ENCODE measurements at regions of chr2 and their contacts with region 1.

Region 1: DNA sequence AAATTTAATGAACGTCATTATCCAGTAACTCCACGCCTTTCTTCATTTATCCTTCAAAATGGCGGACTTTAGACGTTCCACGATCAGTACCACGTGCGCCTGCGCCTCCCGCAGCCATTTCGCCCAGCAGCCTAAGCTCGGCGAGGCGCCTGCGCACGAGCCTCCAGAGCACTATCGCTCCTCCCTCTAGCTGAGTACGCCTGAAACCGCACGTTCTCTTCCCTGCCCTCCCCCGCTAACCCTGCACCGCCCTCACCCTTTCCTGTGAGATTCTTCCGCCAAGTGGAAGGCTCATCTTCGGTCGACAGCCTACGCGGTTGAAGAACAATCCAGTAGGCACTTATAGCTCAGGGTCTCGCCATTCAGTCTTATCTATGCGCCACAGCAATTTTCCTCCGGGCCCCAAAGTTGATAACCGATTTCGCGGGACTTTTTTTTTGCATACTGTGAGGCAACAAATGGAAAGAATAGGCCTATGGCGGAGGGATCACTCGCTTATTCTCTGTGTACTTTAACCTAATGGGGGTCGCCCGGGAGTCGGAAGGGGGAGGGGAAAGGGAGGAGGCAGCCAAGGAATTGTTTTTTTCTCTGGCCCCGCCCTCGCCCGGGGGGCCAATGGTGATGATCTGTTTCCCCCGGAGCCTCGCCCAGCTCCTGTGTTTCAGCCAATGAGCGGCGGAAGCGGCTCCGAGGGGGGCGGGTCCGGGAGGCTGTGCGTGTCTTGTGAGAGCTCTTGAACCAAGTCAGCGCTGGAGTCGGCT is at the start of gene KDM3A:
- DNase-seq: peak; percentile 95 to 100 (median 99)
- ATAC-seq: peak; percentile 87
- H3K4me3 ChIP-seq: peak within 1 kb of the TSS; percentile 88
- H3K4me3 Mint-ChIP-seq: peak within 1 kb of the TSS; percentile 92 to 99 (median 97)
- H3K27ac ChIP-seq: peak within 1 kb of the TSS; percentile 78
- H3K27ac Mint-ChIP-seq: peak within 1 kb of the TSS; percentile 97 to 99 (median 99)
- H3K4me1 ChIP-seq: peaks cover 31 to 34% of the 10 kb centered on the region in 2 donors
- H3K4me1 Mint-ChIP-seq: peaks cover 34 to 51% (median 44%) of the 10 kb centered on the region in 7 donors
- H3K27me3 ChIP-seq: no peaks in the 10 kb centered on the region
- H3K27me3 Mint-ChIP-seq: peaks cover 0 to 10% (median 0%) of the 10 kb centered on the region in 5 donors
- total RNA-seq, gene KDM3A: 132 to 191 (median 169) TPM

Region 2: DNA sequence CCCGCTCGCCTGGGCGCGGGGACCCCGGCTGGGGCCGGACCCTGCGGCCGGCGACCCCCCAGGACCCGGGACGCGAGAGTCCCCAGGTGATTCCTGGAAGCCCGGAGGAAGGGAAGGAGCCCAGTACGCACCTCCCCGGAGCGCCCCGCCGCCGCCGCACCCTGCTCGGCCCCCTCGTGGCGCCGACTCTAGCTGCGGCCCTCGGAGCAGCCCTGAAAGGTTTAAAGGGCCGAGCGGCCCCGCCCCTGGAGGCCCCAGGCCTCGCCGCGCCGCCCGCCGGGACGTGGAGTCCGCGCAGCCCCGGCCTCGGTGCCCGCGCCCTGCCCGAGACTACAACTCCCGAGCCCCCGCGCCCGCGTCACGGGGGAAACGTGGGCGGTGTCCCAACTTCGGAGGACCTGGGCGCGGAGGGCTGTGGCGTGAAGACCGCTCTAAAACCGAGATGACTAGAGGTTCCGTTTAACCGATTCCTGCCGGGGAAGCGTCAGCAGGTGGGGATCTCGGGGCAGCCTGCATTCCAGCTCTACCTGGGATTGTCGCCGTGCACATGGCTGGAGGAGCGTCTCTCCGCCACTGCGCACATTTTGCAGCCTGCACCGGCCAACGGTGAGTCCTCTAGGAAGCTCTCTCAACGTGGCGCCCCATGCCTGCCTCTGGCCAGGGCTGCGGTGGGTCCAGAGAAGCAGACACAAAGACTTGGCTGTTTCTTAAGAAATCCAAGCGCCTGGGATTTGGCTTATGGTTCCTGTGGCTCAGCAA is 838.2 kb before region 1 on chr2 and contains the start of gene TMEM150A:
- CTCF ChIA-PET with region 1: no interaction called
- POLR2A ChIA-PET with region 1: no interaction called
- intact Hi-C with region 1: loop called in 1 of 2 experiments (anchors 5 kb)
- DNase-seq: peak; percentile 68 to 91 (median 78)
- ATAC-seq: peak; percentile 97
- H3K4me3 ChIP-seq: peak within 1 kb of the TSS; percentile 99
- H3K4me3 Mint-ChIP-seq: peak within 1 kb of the TSS; percentile 89 to 98 (median 91)
- H3K27ac ChIP-seq: peak within 1 kb of the TSS; percentile 81
- H3K27ac Mint-ChIP-seq: peak within 1 kb of the TSS; percentile 42 to 96 (median 82)
- H3K4me1 ChIP-seq: peaks cover 7 to 9% of the 10 kb centered on the region in 2 donors
- H3K4me1 Mint-ChIP-seq: peaks cover 16 to 45% (median 37%) of the 10 kb centered on the region in 7 donors
- H3K27me3 ChIP-seq: no peaks in the 10 kb centered on the region
- H3K27me3 Mint-ChIP-seq: peaks cover 0 to 2% (median 0%) of the 10 kb centered on the region in 5 donors
- total RNA-seq, gene TMEM150A: 5.1 to 17.8 (median 11.2) TPM

Region 3: GRCh38 chr2:85888684-85889626 is 551.9 kb before region 1 on chr2 and contains the start of gene ST3GAL5:
- CTCF ChIA-PET with region 1: no interaction called
- POLR2A ChIA-PET with region 1: interaction called, 3 read pairs
- intact Hi-C with region 1: loop called in 1 of 2 experiments (anchors 2 kb)
- DNase-seq: peak; percentile 89 to 96 (median 93)
- ATAC-seq: peak; percentile 95
- H3K4me3 ChIP-seq: peak within 1 kb of the TSS; percentile 77
- H3K4me3 Mint-ChIP-seq: peak within 1 kb of the TSS; percentile 88 to 100 (median 96)
- H3K27ac ChIP-seq: peak within 1 kb of the TSS; percentile 93
- H3K27ac Mint-ChIP-seq: peak within 1 kb of the TSS; percentile 89 to 99 (median 98)
- H3K4me1 ChIP-seq: peaks cover 24 to 47% of the 10 kb centered on the region in 2 donors
- H3K4me1 Mint-ChIP-seq: peaks cover 48 to 77% (median 72%) of the 10 kb centered on the region in 7 donors
- H3K27me3 ChIP-seq: no peaks in the 10 kb centered on the region
- H3K27me3 Mint-ChIP-seq: no peaks in the 10 kb centered on the region
- total RNA-seq, gene ST3GAL5: 37.9 to 53.6 (median 43.0) TPM

Region 4: DNA sequence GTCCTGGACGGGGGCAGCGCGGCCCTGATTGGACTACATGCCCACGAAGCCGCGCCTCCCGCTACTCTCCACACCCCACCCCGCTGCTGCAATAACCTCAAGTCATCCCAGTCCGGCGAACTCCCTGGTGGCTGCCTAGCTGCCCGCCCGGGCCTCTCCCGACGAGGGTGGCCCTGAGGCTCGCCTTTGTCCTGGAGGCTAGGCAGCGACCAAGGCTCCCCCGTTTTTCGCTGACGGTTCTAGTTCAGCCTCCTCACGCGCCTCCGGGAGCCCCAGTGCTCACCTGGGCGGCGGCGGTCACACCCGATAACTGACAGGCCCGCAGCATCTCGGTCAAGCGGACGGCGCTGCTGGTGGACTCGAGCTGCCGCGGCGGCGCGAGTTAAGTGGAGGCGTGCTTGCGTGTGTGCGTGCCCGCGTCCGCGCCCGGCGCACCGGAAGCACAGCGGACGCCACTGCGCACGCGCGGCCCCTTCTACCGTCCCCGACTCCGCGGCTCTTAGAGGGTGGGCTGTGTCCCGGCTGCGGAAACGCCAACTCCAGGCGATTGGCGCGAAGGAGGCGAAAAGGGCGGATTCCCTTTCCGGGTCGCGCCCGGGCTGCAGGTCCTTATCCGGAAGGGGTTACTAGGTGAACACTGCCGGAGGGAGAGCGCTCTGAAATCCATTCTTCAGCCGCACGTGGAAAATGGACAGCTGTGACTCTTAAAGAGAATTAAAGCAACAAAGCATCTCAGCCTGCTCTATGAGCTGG is 245.6 kb before region 1 on chr2 and contains the start of gene IMMT:
- CTCF ChIA-PET with region 1: no interaction called
- POLR2A ChIA-PET with region 1: interaction called, 43 read pairs
- intact Hi-C with region 1: loop called (anchors 1 kb)
- DNase-seq: peak; percentile 86 to 96 (median 94)
- ATAC-seq: peak; percentile 94
- H3K4me3 ChIP-seq: peak within 1 kb of the TSS; percentile 74
- H3K4me3 Mint-ChIP-seq: peak within 1 kb of the TSS; percentile 86 to 99 (median 95)
- H3K27ac ChIP-seq: peak within 1 kb of the TSS; percentile 97
- H3K27ac Mint-ChIP-seq: peak within 1 kb of the TSS; percentile 82 to 97 (median 90)
- H3K4me1 ChIP-seq: peaks cover 15 to 23% of the 10 kb centered on the region in 2 donors
- H3K4me1 Mint-ChIP-seq: peaks cover 35 to 74% (median 60%) of the 10 kb centered on the region in 7 donors
- H3K27me3 ChIP-seq: no peaks in the 10 kb centered on the region
- H3K27me3 Mint-ChIP-seq: no peaks in the 10 kb centered on the region
- total RNA-seq, gene IMMT: 59.2 to 164 (median 77.0) TPM

Region 5: DNA sequence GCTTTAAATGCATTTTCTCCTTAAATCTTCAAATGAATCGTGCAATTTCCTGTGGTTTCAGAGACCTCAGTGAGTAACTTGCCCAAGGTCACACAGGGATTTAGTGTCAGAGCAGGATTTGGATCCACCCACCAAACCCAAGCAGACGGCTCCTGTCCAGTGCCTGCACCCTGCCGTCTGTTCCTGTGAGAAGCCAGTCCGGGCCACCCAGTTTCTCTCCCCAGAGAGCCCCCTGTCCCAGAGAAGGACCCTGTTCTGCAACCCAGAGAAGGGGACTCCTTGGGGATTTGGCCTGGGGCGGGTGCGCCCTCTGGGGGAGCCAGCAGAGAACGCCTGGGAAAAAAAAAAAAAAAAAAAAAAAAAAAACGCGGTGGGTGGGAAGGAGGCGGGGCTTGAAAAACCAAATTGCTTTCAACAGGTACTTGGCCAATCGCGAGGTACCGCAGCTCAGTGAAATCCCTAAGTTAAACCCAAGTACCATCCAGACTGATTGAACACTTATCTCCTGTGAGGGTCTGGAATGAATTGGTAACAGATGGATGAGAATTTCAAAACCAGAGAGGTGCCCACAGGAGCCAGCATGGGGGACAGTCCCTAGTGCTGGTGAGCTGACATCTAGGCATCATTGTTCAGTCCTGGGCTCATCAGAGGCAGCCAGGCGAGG is 72.5 kb before region 1 on chr2:
- CTCF ChIA-PET with region 1: interaction called, 11 read pairs
- POLR2A ChIA-PET with region 1: interaction called, 97 read pairs
- intact Hi-C with region 1: loop called in 1 of 2 experiments (anchors 1 kb)
- DNase-seq: peak; percentile 12 to 51 (median 43)
- ATAC-seq: peak; percentile 75
- H3K4me3 ChIP-seq: peak overlapping the region; percentile 50
- H3K4me3 Mint-ChIP-seq: peak overlapping the region; percentile 43 to 84 (median 70)
- H3K27ac ChIP-seq: no peak overlapping the region
- H3K27ac Mint-ChIP-seq: peak overlapping the region in 8 of 9 donors; percentile 60 to 94 (median 82)
- H3K4me1 ChIP-seq: peaks cover 6 to 51% of the 10 kb centered on the region in 2 donors
- H3K4me1 Mint-ChIP-seq: peaks cover 24 to 77% (median 63%) of the 10 kb centered on the region in 7 donors
- H3K27me3 ChIP-seq: no peaks in the 10 kb centered on the region
- H3K27me3 Mint-ChIP-seq: no peaks in the 10 kb centered on the region

Region 6: GRCh38 chr2:86471637-86472036 is 30.8 kb after region 1 on chr2:
- CTCF ChIA-PET with region 1: interaction called, 5 read pairs
- POLR2A ChIA-PET with region 1: interaction called, 40 read pairs
- intact Hi-C with region 1: loop called (anchors 1 to 2 kb)
- DNase-seq: no peak
- ATAC-seq: no peak
- H3K4me3 ChIP-seq: no peak overlapping the region
- H3K4me3 Mint-ChIP-seq: peak overlapping the region in 1 of 10 donors; percentile 30
- H3K27ac ChIP-seq: no peak overlapping the region
- H3K27ac Mint-ChIP-seq: peak overlapping the region in 3 of 9 donors; percentile 12 to 69 (median 20)
- H3K4me1 ChIP-seq: peaks cover 0 to 12% of the 10 kb centered on the region in 2 donors
- H3K4me1 Mint-ChIP-seq: peaks cover 30 to 75% (median 61%) of the 10 kb centered on the region in 7 donors
- H3K27me3 ChIP-seq: no peaks in the 10 kb centered on the region
- H3K27me3 Mint-ChIP-seq: no peaks in the 10 kb centered on the region

Region 7: GRCh38 chr2:86562922-86563649 is 122.3 kb after region 1 on chr2 and contains the start of gene CHMP3:
- CTCF ChIA-PET with region 1: interaction called, 4 read pairs
- POLR2A ChIA-PET with region 1: interaction called, 26 read pairs
- intact Hi-C with region 1: loop called (anchors 1 kb)
- DNase-seq: peak; percentile 95 to 98 (median 96)
- ATAC-seq: peak; percentile 94
- H3K4me3 ChIP-seq: peak within 1 kb of the TSS; percentile 72
- H3K4me3 Mint-ChIP-seq: peak within 1 kb of the TSS in 9 of 10 donors; percentile 95 to 99 (median 97)
- H3K27ac ChIP-seq: peak within 1 kb of the TSS; percentile 99
- H3K27ac Mint-ChIP-seq: peak within 1 kb of the TSS; percentile 96 to 100 (median 98)
- H3K4me1 ChIP-seq: peaks cover 11 to 25% of the 10 kb centered on the region in 2 donors
- H3K4me1 Mint-ChIP-seq: peaks cover 11 to 42% (median 29%) of the 10 kb centered on the region in 7 donors
- H3K27me3 ChIP-seq: no peaks in the 10 kb centered on the region
- H3K27me3 Mint-ChIP-seq: peaks cover 0 to 7% (median 0%) of the 10 kb centered on the region in 5 donors
- total RNA-seq, gene CHMP3: 39.9 to 103 (median 71.4) TPM

Measured in naive thymus-derived CD4-positive, alpha-beta T cell (primary cell).